ENCODE measurements at regions of chr5 and their contacts with region 1.

Region 1: GRCh38 chr5:141878711-141879425 is 658 bp upstream of the PCDH1 start:
- DNase-seq: peak; percentile 90
- H3K4me3 ChIP-seq: peak overlapping the region; percentile 50 to 58 (median 53)
- H3K27ac ChIP-seq: no peak overlapping the region
- H3K4me1 ChIP-seq: peaks cover 26% of the 10 kb centered on the region
- H3K27me3 ChIP-seq: peaks cover 11% of the 10 kb centered on the region
- CTCF ChIP-seq: peak; percentile 98 to 99

Region 2: GRCh38 chr5:141664732-141665461 is 214.0 kb before region 1 on chr5:
- CTCF ChIA-PET with region 1: no interaction called
- dilution Hi-C with region 1: no loop called
- in situ Hi-C with region 1: no loop called
- intact Hi-C with region 1: loop called (anchors 1 kb)
- DNase-seq: no peak
- H3K4me3 ChIP-seq: no peak overlapping the region
- H3K27ac ChIP-seq: no peak overlapping the region
- H3K4me1 ChIP-seq: no peaks in the 10 kb centered on the region
- H3K27me3 ChIP-seq: no peaks in the 10 kb centered on the region
- CTCF ChIP-seq: peak; percentile 84 to 91

Region 3: DNA sequence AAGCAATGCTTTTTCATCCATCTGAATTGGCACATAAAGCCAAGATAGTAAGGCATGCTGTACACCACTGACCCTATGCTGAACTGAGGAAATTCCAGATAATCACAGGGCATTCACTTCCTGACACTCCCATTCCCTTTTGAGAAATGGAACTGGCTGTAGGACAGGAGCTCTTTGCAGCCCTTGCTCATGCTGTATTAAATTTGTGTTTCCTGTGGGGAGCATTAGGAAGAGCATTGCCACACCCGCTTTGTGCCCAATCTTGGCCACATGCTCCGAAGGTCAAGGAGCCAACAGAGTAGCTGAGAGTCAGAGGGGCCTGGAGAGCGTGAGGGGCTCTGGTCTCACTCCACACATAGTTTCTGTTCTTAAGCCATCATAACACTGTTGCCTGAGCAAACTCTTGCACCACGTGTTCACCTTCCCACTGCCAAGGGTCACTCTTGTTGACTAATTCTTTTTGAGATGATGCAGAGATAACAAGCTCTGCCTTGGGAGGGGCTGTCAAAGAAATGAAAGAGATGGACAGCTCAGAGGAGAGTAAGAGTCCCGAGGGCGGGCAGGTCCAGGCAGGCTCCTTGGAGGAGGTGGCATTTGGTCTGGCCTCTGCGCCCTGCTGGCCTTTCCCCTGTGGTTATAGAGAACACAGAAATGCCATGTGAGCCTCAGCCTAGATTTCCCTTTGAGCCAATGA is 165.1 kb before region 1 on chr5:
- CTCF ChIA-PET with region 1: interaction called, 4 read pairs
- dilution Hi-C with region 1: no loop called
- in situ Hi-C with region 1: no loop called
- intact Hi-C with region 1: loop called (anchors 1 kb)
- DNase-seq: peak; percentile 96
- H3K4me3 ChIP-seq: no peak overlapping the region
- H3K27ac ChIP-seq: peak overlapping the region; percentile 77
- H3K4me1 ChIP-seq: peaks cover 50% of the 10 kb centered on the region
- H3K27me3 ChIP-seq: no peaks in the 10 kb centered on the region
- CTCF ChIP-seq: no peak

Region 4: GRCh38 chr5:141849375-141850243 is 29.3 kb before region 1 on chr5:
- CTCF ChIA-PET with region 1: interaction called, 3 read pairs
- dilution Hi-C with region 1: no loop called
- in situ Hi-C with region 1: no loop called
- intact Hi-C with region 1: loop called (anchors 2 kb)
- DNase-seq: peak; percentile 84
- H3K4me3 ChIP-seq: peak overlapping the region; percentile 52 to 66 (median 60)
- H3K27ac ChIP-seq: peak overlapping the region; percentile 87
- H3K4me1 ChIP-seq: peaks cover 17% of the 10 kb centered on the region
- H3K27me3 ChIP-seq: no peaks in the 10 kb centered on the region
- CTCF ChIP-seq: peak in 1 of 2 donors; percentile 1

Region 5: GRCh38 chr5:141960449-141961202 is 81.8 kb after region 1 on chr5:
- CTCF ChIA-PET with region 1: interaction called, 5 read pairs
- dilution Hi-C with region 1: no loop called
- in situ Hi-C with region 1: loop called in 1 of 2 experiments (anchors 5 kb)
- intact Hi-C with region 1: no loop called
- DNase-seq: peak; percentile 73
- H3K4me3 ChIP-seq: no peak overlapping the region
- H3K27ac ChIP-seq: no peak overlapping the region
- H3K4me1 ChIP-seq: peaks cover 3% of the 10 kb centered on the region
- H3K27me3 ChIP-seq: no peaks in the 10 kb centered on the region
- CTCF ChIP-seq: peak; percentile 82 to 83

Measured in mammary epithelial cell (primary cell).